ENCODE measurements at regions of chr11 and their contacts with region 1.

Region 1: GRCh38 chr11:17978553-17979287 is 34.1 kb downstream of the SERGEF start:
- DNase-seq: no peak
- H3K4me3 ChIP-seq: no peak overlapping the region
- H3K27ac ChIP-seq: no peak overlapping the region
- H3K4me1 ChIP-seq: no peaks in the 10 kb centered on the region
- H3K27me3 ChIP-seq: no peaks in the 10 kb centered on the region
- CTCF ChIP-seq: peak in 2 of 3 experiments; percentile 29 to 38
- POLR2A ChIP-seq: no peak

Region 2: DNA sequence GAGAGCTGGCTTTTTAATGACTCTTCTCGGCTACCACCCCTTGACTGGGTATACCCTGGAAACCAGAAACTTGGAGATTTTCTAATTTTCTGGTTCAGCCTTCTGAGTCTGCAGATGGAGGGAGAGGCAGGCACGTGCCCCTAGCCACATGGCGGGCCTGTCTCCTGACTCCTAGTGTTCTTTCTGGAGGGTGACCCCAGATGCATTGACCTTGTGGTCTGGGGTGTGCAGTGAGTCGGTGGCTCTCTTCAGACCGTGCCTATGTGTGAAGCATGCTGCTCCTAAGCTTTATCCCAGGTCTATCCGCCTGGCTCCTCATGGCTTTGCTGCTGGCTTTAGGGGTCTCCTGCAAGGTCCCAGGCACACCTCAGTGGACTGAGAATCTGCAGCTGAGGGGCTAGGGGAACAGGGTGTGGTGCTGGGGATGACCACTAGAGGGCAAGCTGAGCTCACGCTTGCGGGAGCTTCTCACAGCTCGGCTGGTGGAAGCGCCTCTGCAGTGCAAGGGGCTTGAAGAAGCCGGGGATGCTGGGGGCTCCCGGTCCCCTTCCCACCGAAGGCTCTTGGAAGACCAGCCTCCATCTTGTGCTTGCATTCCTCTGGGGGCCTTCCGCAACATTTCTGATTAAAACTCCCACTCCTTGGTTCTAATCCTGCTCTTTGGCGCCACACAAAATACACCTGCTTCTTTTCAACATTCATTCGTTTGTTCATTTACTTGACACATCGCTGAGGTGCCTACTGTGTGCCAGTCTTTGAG is 379.8 kb before region 1 on chr11:
- intact Hi-C with region 1: loop called (anchors 10 kb)
- DNase-seq: peak; percentile 72 to 85
- H3K4me3 ChIP-seq: no peak overlapping the region
- H3K27ac ChIP-seq: no peak overlapping the region
- H3K4me1 ChIP-seq: no peaks in the 10 kb centered on the region
- H3K27me3 ChIP-seq: no peaks in the 10 kb centered on the region
- CTCF ChIP-seq: peak; percentile 74 to 81 (median 76)
- POLR2A ChIP-seq: no peak

Region 3: DNA sequence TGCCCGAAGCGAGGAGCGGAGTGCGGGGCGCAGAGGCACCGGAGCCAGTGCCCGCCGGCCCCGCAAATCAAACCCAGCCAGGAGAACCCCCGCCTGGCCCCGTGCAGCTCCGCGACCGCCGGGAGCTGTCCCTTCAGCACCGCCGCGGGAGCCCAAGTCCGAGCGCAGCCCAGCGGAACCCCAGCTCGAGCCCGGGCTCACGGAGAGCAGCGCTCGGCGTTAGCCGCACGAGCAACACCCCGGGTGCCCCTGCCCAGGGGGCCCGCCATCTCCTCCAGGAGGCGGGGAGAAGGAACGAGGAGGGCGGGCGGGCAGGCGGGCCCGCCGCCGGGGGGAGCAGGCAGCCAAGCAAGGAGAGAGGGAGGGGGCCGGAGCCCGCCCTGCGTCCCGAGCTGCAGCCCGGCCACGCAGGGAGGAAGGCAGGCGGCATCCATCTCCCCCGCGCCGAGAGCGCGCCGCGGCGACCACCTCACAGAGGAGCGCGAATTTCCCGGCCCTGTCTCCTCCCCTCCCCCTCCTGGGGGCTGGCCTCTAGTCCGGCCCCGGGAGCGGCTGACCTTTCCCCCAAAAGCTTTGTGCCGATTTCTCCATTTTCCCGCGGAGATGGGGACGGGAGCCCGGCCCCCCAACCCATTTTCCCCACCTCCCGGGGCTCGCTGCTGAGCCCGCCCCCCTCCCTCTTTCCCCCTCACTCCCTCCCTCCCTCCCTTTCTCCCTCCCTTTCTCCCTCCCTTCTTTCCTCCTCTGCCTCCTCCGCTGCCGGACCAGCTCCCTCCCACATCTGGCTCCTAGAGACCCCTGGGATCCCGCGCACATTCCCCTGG is 243.5 kb before region 1 on chr11:
- intact Hi-C with region 1: loop called (anchors 2 kb)
- DNase-seq: no peak
- H3K4me3 ChIP-seq: peak overlapping the region; percentile 45 to 47
- H3K27ac ChIP-seq: peak overlapping the region; percentile 63
- H3K4me1 ChIP-seq: peaks cover 19% of the 10 kb centered on the region
- H3K27me3 ChIP-seq: no peaks in the 10 kb centered on the region
- CTCF ChIP-seq: peak in 1 of 3 experiments; percentile 16
- POLR2A ChIP-seq: no peak